ENCODE measurements at regions of chr5 and their contacts with region 1.

Region 1: DNA sequence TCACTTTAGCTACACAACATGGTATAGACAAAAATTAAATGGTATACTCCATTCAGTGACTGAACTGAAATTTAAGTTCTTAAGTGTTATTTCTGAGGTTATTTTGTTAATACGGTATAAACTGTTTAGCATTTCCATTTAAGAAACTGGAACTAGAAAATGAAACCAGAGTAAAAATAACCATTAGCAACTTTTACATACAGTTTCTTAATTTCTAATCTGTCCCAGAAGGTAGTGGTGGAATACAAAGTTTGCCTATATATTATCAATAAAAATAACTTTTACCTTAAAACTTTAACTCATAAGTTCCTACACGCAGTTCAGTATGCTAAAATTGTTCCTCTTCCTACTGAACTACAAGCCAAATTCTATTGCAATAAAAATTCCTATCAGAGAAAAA is 10.3 kb downstream of the GOLPH3 start:
- DNase-seq: no peak
- H3K4me3 ChIP-seq: no peak overlapping the region
- H3K27ac ChIP-seq: no peak overlapping the region
- H3K4me1 ChIP-seq: no peaks in the 10 kb centered on the region
- H3K27me3 ChIP-seq: no peaks in the 10 kb centered on the region
- CTCF ChIP-seq: no peak

Region 2: DNA sequence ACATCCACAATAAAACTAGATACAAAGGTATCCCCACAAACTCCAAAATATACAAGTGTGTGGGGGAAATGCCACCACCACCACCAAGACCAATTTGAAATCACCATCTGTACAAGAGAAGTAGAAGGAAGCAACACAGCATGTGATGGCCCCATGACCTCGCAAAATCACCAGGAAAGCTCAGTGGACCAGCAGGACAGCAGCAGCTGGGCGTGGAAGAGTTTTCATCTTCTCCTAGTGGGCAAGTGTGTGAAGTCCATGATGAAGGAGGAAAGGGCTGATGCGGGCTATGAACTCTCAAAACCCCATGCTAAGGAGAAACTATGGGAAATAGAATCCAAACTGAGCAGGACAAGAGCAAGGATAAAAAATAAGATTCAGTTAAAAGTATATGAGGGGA is 47.8 kb before region 1 on chr5:
- CTCF ChIA-PET with region 1: no interaction called
- POLR2A ChIA-PET with region 1: interaction called, 10 read pairs
- intact Hi-C with region 1: no loop called
- DNase-seq: no peak
- H3K4me3 ChIP-seq: no peak overlapping the region
- H3K27ac ChIP-seq: no peak overlapping the region
- H3K4me1 ChIP-seq: no peaks in the 10 kb centered on the region
- H3K27me3 ChIP-seq: no peaks in the 10 kb centered on the region
- CTCF ChIP-seq: no peak

Measured in PC-9 (cell line).